B cell (primary cell): ENCODE measurements at regions of chr17 and their contacts with region 1.

Region 1: DNA sequence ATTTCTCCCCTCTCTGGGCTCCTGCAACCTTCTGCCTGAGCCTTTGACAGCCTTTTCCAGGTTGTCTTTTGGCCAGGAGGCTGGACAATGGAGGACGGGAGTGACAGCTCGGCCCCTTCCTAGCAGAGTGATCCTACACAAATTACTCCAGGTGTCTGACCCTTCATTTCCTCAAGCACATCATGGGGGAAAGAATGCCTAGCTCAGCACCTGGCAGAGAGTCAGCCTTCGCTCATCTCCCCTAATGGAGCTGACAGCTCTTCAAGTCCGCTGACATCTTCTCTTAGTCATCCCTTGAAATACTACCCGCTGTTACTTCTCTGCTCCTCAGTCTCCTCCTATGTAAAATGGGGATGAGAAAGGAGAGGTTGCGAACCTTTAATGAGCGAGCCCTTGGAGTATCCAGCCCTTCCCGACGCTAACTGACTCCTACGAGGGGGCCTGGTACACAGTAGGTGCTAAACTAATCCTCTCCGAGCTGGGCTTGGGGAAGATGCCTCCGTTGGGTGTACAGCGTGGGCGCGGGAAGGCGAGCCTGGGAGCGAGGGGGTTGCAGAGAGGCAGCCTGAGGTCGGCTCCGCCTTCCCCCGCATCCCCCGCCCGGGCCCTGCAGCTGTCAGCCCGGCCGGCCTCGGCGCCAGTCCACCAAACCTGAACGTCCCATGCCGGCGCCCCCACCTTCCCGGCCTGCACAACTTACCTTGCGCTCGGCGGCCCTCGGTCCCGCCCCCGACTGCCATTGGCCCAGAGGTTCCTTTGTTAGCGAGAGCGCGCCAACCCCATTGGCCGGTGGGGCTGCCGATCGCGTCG is 481 bp upstream of the MPRIP start:
- DNase-seq: peak; percentile 97
- ATAC-seq: peak; percentile 92
- H3K4me3 ChIP-seq: peak overlapping the region in 4 of 5 experiments; percentile 43 to 55 (median 50)
- H3K4me3 Mint-ChIP-seq: peak overlapping the region; percentile 71
- H3K27ac ChIP-seq: no peak overlapping the region
- H3K27ac Mint-ChIP-seq: peak overlapping the region; percentile 26
- H3K4me1 ChIP-seq: peaks cover 40 to 48% of the 10 kb centered on the region in 2 donors
- H3K4me1 Mint-ChIP-seq: peaks cover 47% of the 10 kb centered on the region
- H3K27me3 ChIP-seq: no peaks in the 10 kb centered on the region
- H3K27me3 Mint-ChIP-seq: no peaks in the 10 kb centered on the region
- CTCF ChIP-seq: no peak

Region 2: DNA sequence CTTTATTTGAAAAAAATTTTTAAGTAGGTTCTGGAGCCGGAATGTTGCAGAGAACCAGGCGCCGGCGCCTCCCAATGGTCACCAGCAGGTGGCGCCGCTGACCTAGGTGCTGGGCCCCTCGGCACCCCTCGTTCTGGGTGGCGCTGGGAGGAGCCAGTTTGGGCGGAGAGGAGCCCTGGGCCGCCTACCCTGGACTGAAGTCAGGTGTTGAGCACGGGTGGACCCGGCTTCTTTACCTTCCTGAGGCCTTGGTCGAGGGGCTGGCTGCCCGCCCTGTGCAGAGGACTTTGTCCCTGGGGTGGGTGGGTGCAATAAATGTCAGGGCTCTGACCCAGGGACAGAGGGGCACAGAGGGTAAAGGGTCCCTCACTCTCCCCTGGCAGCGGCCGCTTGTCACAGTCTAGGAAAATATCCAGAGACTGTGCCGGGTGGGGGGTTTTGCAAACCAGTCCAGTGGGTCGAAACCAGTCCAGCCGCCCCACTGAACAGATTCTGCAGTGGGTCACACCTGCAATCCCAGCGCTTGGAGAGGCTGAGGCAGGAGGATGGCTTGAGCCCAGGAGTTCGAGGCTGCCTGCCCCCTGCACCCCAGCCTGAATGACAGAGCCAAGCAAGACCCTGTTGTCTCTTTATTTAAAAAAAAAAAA is 39.8 kb before region 1 on chr17:
- CTCF ChIA-PET with region 1: no interaction called
- POLR2A ChIA-PET with region 1: no interaction called
- intact Hi-C with region 1: loop called (anchors 5 kb)
- DNase-seq: peak; percentile 83
- ATAC-seq: peak; percentile 92
- H3K4me3 ChIP-seq: no peak overlapping the region
- H3K4me3 Mint-ChIP-seq: no peak overlapping the region
- H3K27ac ChIP-seq: no peak overlapping the region
- H3K27ac Mint-ChIP-seq: no peak overlapping the region
- H3K4me1 ChIP-seq: peaks cover 0 to 8% of the 10 kb centered on the region in 2 donors
- H3K4me1 Mint-ChIP-seq: peaks cover 5% of the 10 kb centered on the region
- H3K27me3 ChIP-seq: no peaks in the 10 kb centered on the region
- H3K27me3 Mint-ChIP-seq: no peaks in the 10 kb centered on the region
- CTCF ChIP-seq: peak; percentile 96

Region 3: GRCh38 chr17:17067257-17067656 is 25.5 kb after region 1 on chr17:
- CTCF ChIA-PET with region 1: no interaction called
- POLR2A ChIA-PET with region 1: no interaction called
- intact Hi-C with region 1: loop called (anchors 2 kb)
- DNase-seq: no peak
- ATAC-seq: no peak
- H3K4me3 ChIP-seq: no peak overlapping the region
- H3K4me3 Mint-ChIP-seq: no peak overlapping the region
- H3K27ac ChIP-seq: no peak overlapping the region
- H3K27ac Mint-ChIP-seq: no peak overlapping the region
- H3K4me1 ChIP-seq: peaks cover 21 to 23% of the 10 kb centered on the region in 2 donors
- H3K4me1 Mint-ChIP-seq: peaks cover 61% of the 10 kb centered on the region
- H3K27me3 ChIP-seq: no peaks in the 10 kb centered on the region
- H3K27me3 Mint-ChIP-seq: no peaks in the 10 kb centered on the region
- CTCF ChIP-seq: no peak

Region 4: GRCh38 chr17:17109896-17110295 is 68.1 kb after region 1 on chr17:
- CTCF ChIA-PET with region 1: no interaction called
- POLR2A ChIA-PET with region 1: no interaction called
- intact Hi-C with region 1: loop called (anchors 5 kb)
- DNase-seq: peak; percentile 73
- ATAC-seq: peak; percentile 84
- H3K4me3 ChIP-seq: no peak overlapping the region
- H3K4me3 Mint-ChIP-seq: peak overlapping the region; percentile 62
- H3K27ac ChIP-seq: peak overlapping the region; percentile 36 to 74
- H3K27ac Mint-ChIP-seq: peak overlapping the region; percentile 87
- H3K4me1 ChIP-seq: peaks cover 67 to 78% of the 10 kb centered on the region in 2 donors
- H3K4me1 Mint-ChIP-seq: peaks cover 84% of the 10 kb centered on the region
- H3K27me3 ChIP-seq: no peaks in the 10 kb centered on the region
- H3K27me3 Mint-ChIP-seq: no peaks in the 10 kb centered on the region
- CTCF ChIP-seq: no peak

Region 5: DNA sequence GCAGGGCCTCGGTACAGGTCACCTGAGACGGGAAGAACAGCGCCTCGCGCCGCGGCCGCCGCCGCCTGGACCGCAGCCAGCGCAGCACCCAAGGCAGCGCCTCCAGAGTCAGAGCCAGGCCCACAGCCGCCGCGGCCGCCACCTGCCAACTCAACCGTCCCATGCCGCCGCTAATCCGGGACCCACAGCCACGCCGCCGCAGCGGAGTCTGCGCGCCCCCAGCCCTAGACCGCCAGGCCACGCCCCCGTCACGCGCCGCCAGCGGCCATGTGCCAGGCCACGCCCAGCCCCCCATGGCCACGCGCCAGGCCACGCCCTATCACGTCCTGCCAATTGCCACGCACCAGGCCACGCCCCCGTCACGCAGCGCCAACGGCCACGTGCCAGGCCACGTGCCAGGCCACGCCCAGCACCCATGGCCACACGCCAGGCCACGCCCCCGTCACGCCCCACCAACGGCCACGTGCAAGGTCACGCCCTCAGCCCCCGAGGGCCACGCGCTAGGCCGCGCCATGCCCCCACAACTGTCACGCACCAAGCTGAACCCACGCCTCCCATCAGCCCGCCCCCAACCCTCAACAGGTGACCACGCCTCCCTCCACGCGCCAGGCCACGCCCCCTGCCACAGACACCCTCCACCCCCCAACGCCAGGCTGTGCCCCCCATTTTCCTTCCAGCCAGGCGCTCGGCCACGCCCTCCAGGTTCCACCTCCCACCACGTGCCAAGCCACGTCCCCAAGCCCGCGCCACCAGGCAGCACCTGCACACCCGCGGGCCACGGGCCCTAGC is 164.5 kb after region 1 on chr17 and contains the start of gene PLD6:
- CTCF ChIA-PET with region 1: no interaction called
- POLR2A ChIA-PET with region 1: no interaction called
- intact Hi-C with region 1: loop called (anchors 10 kb)
- DNase-seq: peak; percentile 96
- ATAC-seq: peak; percentile 85
- H3K4me3 ChIP-seq: peak within 1 kb of the TSS in 4 of 5 experiments; percentile 57 to 71 (median 59)
- H3K4me3 Mint-ChIP-seq: peak within 1 kb of the TSS; percentile 93
- H3K27ac ChIP-seq: peak within 1 kb of the TSS; percentile 65 to 66
- H3K27ac Mint-ChIP-seq: peak within 1 kb of the TSS; percentile 89
- H3K4me1 ChIP-seq: peaks cover 14 to 25% of the 10 kb centered on the region in 2 donors
- H3K4me1 Mint-ChIP-seq: peaks cover 20% of the 10 kb centered on the region
- H3K27me3 ChIP-seq: no peaks in the 10 kb centered on the region
- H3K27me3 Mint-ChIP-seq: no peaks in the 10 kb centered on the region
- CTCF ChIP-seq: no peak
- total RNA-seq, gene PLD6: 4.1 and 5.0 TPM in 2 replicates